Breast epithelium (tissue), 4 donors: ENCODE measurements at regions of chr1 and their contacts with region 1.

Region 1: GRCh38 chr1:17381161-17381560 is 9.2 kb downstream of the PADI6 start:
- DNase-seq: no peak
- H3K4me3 ChIP-seq: no peak overlapping the region
- H3K27ac ChIP-seq: no peak overlapping the region
- H3K4me1 ChIP-seq: no peaks in the 10 kb centered on the region
- H3K27me3 ChIP-seq: no peaks in the 10 kb centered on the region
- CTCF ChIP-seq: no peak
- POLR2A ChIP-seq: no peak

Region 2: GRCh38 chr1:17403104-17403503 is 21.9 kb after region 1 on chr1:
- intact Hi-C with region 1: no loop called
- DNase-seq: peak; percentile 41 to 75
- H3K4me3 ChIP-seq: no peak overlapping the region
- H3K27ac ChIP-seq: no peak overlapping the region
- H3K4me1 ChIP-seq: peaks cover 0 to 6% of the 10 kb centered on the region in 2 donors
- H3K27me3 ChIP-seq: no peaks in the 10 kb centered on the region
- CTCF ChIP-seq: no peak
- POLR2A ChIP-seq: no peak

Region 3: DNA sequence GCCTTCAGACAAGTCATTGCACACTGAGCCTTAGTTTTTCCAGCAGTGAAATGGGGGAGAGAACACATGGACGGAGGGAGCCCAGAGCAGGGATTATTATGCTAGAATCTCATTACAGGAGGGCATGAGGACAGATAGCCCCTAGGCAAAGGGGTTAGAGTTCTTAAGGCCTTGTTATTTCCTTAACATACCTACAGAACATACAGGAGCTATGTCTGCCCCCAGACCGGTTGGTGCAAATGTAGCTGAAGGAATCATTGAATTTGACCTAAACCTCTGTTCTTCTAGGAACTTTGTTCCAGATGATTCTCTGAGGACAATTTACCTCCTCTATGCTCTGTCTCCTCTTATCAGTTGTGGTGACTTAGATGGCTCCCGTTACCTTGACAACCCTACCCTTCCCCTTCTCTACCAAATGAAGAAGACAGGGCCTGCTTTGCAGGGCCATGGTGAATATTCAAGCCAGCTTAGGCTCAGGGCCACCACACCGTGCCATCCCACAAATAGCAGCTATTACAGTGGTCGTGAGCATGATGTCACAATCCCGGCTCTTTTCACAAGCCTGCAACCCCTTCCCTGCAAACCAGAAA is 883.4 kb after region 1 on chr1:
- intact Hi-C with region 1: loop called (anchors 5 kb)
- DNase-seq: no peak
- H3K4me3 ChIP-seq: no peak overlapping the region
- H3K27ac ChIP-seq: no peak overlapping the region
- H3K4me1 ChIP-seq: no peaks in the 10 kb centered on the region
- H3K27me3 ChIP-seq: peaks cover 0 to 34% of the 10 kb centered on the region in 2 donors
- CTCF ChIP-seq: no peak
- POLR2A ChIP-seq: no peak